ENCODE measurements at regions of chr5 and their contacts with region 1.

Region 1: DNA sequence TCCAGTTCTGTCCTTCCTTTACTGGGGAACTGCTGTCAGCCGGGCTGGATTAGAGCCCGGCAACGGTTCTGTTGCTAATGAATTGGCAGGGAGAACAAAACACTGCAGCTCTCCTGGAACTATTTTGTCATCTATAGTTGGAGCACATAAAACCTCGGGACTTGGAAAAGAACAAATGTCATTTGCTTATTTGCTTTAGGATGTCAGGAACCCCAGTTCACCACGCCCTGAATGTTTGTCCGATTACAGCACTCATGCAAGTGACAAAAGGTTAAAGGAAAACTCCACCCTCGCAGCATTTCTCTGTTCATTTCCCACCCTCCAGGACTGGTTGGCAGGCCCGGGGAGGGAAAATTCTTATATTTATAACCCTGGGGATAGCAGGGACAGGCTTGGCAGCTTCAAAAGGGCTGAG is 66.4 kb upstream of the PLPP1 start:
- DNase-seq: peak; percentile 86
- ATAC-seq: peak; percentile 88

Region 2: GRCh38 chr5:55439008-55439407 is 162.2 kb before region 1 on chr5:
- intact Hi-C with region 1: loop called (anchors 5 kb)
- DNase-seq: no peak
- ATAC-seq: peak; percentile 16

Region 3: GRCh38 chr5:55554585-55555202 is 46.5 kb before region 1 on chr5:
- intact Hi-C with region 1: no loop called
- DNase-seq: no peak
- ATAC-seq: no peak

Region 4: DNA sequence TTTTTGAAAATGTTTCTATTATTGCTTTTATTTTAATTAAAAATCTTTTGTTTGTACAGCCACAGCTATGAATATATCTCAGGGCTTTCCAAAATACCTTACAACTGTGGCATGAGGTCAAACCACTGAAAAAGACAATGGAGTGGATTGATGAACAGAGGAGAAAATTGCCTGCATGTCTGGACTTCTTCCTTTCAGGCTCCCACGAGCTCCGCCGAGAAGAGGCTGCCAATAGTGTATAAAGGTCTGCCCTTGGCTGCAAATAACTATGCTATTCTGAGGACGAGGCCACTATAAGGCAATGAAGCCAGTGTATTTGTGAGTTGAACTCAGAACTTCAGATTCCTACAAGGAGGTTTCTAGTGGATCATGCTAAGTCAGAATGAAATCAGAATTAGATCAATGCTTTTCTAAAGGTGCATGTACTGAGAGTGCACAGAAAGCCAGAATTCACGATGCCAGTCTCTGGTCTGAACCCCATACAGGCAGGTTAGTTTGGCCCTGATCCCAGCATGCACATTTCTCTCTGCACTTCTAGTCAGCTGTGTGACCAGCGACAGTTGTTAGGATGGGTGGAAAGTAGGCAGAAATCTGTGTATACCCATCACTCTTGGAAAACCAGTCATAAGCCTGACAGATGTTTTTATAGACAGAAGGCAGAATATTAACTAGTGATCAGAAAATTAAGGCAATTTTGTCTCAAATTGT is 23.7 kb before region 1 on chr5:
- intact Hi-C with region 1: loop called (anchors 1 kb)
- DNase-seq: peak; percentile 75
- ATAC-seq: peak; percentile 92

Region 5: DNA sequence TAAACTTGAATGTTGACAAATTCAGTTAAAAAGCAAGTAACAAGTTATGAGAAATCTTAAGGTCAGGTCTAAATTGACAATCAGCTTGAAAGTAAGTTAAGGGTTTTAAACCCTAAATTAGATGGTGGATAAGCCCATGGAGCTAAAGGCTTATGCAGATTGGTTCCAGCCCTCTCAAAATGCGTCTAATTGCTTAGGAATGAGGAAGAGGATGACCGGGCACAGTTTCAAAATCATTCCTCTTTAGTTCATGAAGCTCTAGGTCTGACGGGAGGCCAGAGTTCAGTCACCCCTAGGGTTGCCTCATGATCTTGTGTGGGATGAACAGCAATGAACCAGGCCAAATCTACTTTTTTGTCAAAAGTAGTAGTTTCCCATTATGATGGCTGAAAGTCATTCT is 35.5 kb after region 1 on chr5:
- intact Hi-C with region 1: loop called (anchors 2 kb)
- DNase-seq: no peak
- ATAC-seq: peak; percentile 70

Region 6: DNA sequence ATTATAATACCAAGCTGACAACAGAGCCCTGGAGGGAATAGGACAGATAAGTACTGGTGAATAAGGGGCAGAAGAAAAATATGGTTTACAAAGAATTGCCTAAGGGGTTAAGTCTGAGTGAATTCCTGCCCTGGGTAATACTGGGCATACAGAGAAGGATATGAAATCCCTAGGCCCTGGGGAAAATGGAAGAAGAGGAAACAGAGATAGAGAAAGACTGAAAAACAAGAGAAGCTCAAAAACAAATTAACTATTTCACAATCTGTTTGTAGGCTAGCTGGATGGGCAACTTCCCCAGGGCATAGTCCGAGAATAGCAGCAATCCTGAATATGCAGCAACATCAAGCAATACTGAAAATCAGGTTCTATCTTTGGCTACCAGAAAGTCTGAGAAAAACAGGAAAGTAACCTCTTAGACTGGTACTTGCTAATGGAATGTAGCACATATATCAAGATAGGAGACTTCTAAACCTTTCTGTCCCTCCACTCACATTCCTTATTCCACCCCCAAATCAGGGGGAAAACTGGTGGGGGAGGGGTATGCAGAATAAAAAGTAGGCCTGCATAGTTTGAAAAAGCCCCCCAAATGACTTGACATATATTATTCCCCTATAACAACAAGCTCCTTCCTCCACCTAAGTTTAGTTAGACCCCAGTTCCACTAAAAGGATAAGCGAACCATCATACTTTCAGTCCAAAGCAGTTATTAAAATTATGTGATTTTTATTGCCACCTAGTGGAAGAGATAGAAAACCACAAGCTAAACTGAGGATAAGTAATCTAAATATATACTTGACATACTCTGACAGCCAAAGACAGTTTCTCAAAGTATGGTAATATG is 90.3 kb after region 1 on chr5:
- intact Hi-C with region 1: loop called (anchors 2 kb)
- DNase-seq: no peak
- ATAC-seq: peak; percentile 73

Measured in Right ventricle myocardium inferior (tissue), 1 donor.